H1 (cell line): ENCODE measurements at regions of chr2 and their contacts with region 1.

Region 1: GRCh38 chr2:173568054-173568453 is 213.4 kb downstream of the CDCA7 start:
- DNase-seq: peak; percentile 31 to 72
- H3K4me3 ChIP-seq: no peak overlapping the region
- H3K27ac ChIP-seq: no peak overlapping the region
- H3K4me1 ChIP-seq: peaks cover 2 to 9% (median 7%) of the 10 kb centered on the region in 4 experiments; a peak in 5 of 7 replicates
- H3K27me3 ChIP-seq: peaks cover 0 to 1% (median 0%) of the 10 kb centered on the region in 4 experiments; a peak in 1 of 7 replicates
- CTCF ChIP-seq: peak; percentile 59 to 83 (median 79)
- EP300 ChIP-seq: no peak
- POLR2A ChIP-seq: no peak
- RAD21 ChIP-seq: peak; percentile 80 to 88

Region 2: DNA sequence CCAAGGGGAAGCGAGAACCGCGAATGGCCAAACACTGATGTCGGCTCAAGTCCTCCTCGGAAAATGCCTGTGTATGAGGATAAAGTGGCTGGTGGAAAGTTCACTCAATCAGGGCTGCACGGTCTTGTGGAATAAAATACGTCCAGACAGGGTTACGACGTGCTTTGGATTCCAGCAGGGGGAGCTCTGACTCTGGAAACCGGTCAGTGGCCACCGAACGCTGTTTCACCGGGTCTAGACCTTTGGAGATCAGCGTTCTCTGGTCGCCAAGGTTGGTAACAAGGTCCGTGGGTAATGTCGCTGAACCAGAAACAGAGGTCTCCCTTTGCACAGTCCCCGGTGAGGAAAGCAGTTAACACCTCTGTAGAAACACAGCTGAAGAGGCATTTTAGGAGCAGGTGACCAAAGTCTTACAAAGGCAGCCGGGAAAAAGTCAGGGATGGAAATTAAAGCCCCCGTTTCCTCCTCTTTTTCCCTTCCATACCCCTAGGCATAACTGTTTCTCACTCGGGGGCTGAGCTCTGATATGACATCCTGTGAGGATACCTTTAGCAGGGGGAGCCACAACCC is 165.6 kb before region 1 on chr2:
- CTCF ChIA-PET with region 1: interaction called, 58 read pairs
- POLR2A ChIA-PET with region 1: no interaction called
- DNase-seq: peak; percentile 58 to 83
- H3K4me3 ChIP-seq: peak overlapping the region in 3 of 4 experiments; percentile 20 to 50 (median 27); a peak in 3 of 8 replicates
- H3K27ac ChIP-seq: no peak overlapping the region
- H3K4me1 ChIP-seq: peaks cover 3 to 10% (median 6%) of the 10 kb centered on the region in 4 experiments; a peak in 4 of 7 replicates
- H3K27me3 ChIP-seq: no peaks in the 10 kb centered on the region; a peak in 2 of 7 replicates
- CTCF ChIP-seq: peak; percentile 78 to 93 (median 92)
- EP300 ChIP-seq: no peak
- POLR2A ChIP-seq: no peak
- RAD21 ChIP-seq: peak; percentile 98 to 99

Region 3: GRCh38 chr2:173448938-173449471 is 119.0 kb before region 1 on chr2:
- CTCF ChIA-PET with region 1: interaction called, 14 read pairs
- POLR2A ChIA-PET with region 1: no interaction called
- DNase-seq: peak; percentile 73 to 93
- H3K4me3 ChIP-seq: peak overlapping the region in 1 of 4 experiments; percentile 42; a peak in 2 of 8 replicates
- H3K27ac ChIP-seq: no peak overlapping the region
- H3K4me1 ChIP-seq: no peaks in the 10 kb centered on the region; a peak in 2 of 7 replicates
- H3K27me3 ChIP-seq: no peaks in the 10 kb centered on the region
- CTCF ChIP-seq: peak; percentile 63 to 82 (median 73)
- EP300 ChIP-seq: no peak
- POLR2A ChIP-seq: peak in 1 of 2 experiments; percentile 46; a peak in 1 of 3 replicates
- RAD21 ChIP-seq: peak; percentile 78 to 79

Region 4: DNA sequence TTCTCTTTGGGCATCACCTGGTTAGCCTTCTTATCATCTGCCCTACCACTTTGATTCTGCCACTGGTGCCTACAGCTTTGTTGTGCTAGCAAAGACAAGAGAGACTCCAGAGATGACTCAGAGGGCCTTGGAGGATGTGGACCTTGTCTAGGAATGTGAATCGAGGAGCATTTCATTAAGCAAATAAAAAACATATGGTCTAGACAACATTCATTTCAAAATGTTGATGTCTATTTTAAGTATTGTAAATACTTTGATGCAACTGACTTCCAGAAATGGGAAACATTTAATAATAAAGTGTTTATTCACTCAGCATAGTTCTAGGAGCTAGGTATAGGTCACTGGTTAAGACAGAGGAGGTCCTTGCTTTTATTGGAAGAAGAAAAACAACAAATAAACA is 17.9 kb before region 1 on chr2:
- CTCF ChIA-PET with region 1: interaction called, 15 read pairs
- POLR2A ChIA-PET with region 1: no interaction called
- DNase-seq: no peak
- H3K4me3 ChIP-seq: no peak overlapping the region
- H3K27ac ChIP-seq: no peak overlapping the region
- H3K4me1 ChIP-seq: no peaks in the 10 kb centered on the region
- H3K27me3 ChIP-seq: no peaks in the 10 kb centered on the region
- CTCF ChIP-seq: no peak
- EP300 ChIP-seq: no peak
- POLR2A ChIP-seq: no peak
- RAD21 ChIP-seq: no peak

Region 5: DNA sequence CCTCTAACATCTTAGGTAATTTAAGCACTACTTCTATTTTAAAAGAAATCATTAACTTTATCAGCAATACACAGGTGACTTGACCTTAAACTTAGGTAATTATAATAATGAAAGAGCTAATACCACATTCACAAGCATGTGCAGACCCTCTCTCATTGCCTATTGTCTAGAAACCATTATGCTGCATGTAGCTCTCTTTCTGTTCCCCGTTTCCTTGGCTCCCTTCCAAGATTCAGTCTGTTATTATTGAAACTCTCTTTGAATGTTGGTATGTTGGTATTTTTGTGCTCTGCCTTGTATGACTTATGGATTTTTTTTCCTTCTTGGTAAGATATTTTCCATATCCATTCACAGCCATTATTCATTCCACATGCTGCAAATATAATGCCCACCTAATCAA is 12.2 kb before region 1 on chr2:
- CTCF ChIA-PET with region 1: interaction called, 21 read pairs
- POLR2A ChIA-PET with region 1: no interaction called
- DNase-seq: no peak
- H3K4me3 ChIP-seq: no peak overlapping the region
- H3K27ac ChIP-seq: no peak overlapping the region
- H3K4me1 ChIP-seq: no peaks in the 10 kb centered on the region
- H3K27me3 ChIP-seq: no peaks in the 10 kb centered on the region
- CTCF ChIP-seq: no peak
- EP300 ChIP-seq: no peak
- POLR2A ChIP-seq: no peak
- RAD21 ChIP-seq: no peak

Region 6: DNA sequence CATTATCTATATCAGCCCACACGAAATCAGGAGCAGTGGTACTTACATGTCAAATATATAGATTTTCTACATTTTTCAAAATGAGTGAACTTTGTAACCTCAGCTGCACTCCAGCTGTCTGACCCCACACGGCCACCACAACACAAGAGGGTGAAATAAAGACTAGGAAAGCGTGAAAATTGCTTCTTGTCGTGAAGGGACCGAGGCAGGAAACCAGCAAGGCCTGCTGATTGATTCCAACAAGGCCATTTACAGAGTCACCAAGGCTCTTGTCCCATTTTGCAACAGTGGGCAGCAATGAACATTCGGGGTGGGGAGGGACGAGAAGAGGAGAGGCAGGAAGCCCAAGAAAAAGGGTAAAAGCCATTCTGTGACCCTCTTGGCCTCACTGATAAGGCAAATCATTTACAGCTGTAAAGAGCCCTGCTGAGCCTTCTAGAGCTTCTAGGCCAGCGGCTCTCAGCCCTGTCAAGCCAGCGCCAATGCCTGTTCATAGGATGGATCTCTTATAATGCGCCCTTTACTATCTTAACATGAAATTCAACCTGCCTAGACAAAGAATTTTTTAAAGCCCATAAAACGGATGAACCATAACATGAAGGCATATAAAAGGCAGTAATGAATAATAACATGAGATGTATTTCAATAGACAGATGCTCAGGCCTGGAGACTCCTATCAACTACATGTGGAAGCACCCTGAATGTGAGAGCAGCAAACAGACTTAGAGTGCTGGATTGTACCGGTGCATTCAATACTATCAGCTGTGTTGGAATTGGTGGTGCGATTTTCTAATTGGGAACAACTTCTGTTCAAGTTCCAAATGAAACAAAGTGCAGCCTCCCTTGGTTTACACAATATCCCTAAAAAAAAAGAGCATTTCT is 55.6 kb after region 1 on chr2:
- CTCF ChIA-PET with region 1: interaction called, 12 read pairs
- POLR2A ChIA-PET with region 1: no interaction called
- DNase-seq: no peak
- H3K4me3 ChIP-seq: no peak overlapping the region
- H3K27ac ChIP-seq: no peak overlapping the region
- H3K4me1 ChIP-seq: peaks cover 0 to 8% (median 4%) of the 10 kb centered on the region in 4 experiments; a peak in 2 of 7 replicates
- H3K27me3 ChIP-seq: no peaks in the 10 kb centered on the region
- CTCF ChIP-seq: no peak
- EP300 ChIP-seq: no peak
- POLR2A ChIP-seq: no peak
- RAD21 ChIP-seq: no peak

Region 7: GRCh38 chr2:174004905-174005605 is 437.0 kb after region 1 on chr2:
- CTCF ChIA-PET with region 1: no interaction called
- POLR2A ChIA-PET with region 1: no interaction called
- DNase-seq: no peak
- H3K4me3 ChIP-seq: no peak overlapping the region
- H3K27ac ChIP-seq: no peak overlapping the region
- H3K4me1 ChIP-seq: no peaks in the 10 kb centered on the region; a peak in 1 of 7 replicates
- H3K27me3 ChIP-seq: no peaks in the 10 kb centered on the region
- CTCF ChIP-seq: no peak
- EP300 ChIP-seq: no peak
- POLR2A ChIP-seq: no peak
- RAD21 ChIP-seq: no peak